Lower leg skin (tissue), 4 donors: ENCODE measurements at regions of chrX and their contacts with region 1.

Region 1: GRCh38 chrX:78693536-78693935 is 34.4 kb upstream of the RTL3 start:
- DNase-seq: no peak
- H3K4me3 ChIP-seq: no peak overlapping the region
- CTCF ChIP-seq: no peak
- POLR2A ChIP-seq: no peak

Region 2: GRCh38 chrX:78624962-78625909 is 68.3 kb before region 1 on chrX:
- intact Hi-C with region 1: loop called (anchors 2 kb)
- DNase-seq: no peak
- H3K4me3 ChIP-seq: no peak overlapping the region
- CTCF ChIP-seq: no peak
- POLR2A ChIP-seq: no peak